ENCODE measurements at regions of chr2 and their contacts with region 1.

Region 1: GRCh38 chr2:171160119-171160955 is at the start of gene TLK1:
- DNase-seq: peak; percentile 75
- H3K4me3 Mint-ChIP-seq: peak within 1 kb of the TSS; percentile 90
- H3K27ac Mint-ChIP-seq: peak within 1 kb of the TSS; percentile 93
- H3K4me1 Mint-ChIP-seq: peaks cover 57% of the 10 kb centered on the region
- H3K27me3 Mint-ChIP-seq: no peaks in the 10 kb centered on the region
- total RNA-seq, gene TLK1: 54.5 to 55.9 TPM

Region 2: GRCh38 chr2:170098626-170099312 is 1061.6 kb before region 1 on chr2:
- CTCF ChIA-PET with region 1: no interaction called
- intact Hi-C with region 1: no loop called
- DNase-seq: no peak
- H3K4me3 Mint-ChIP-seq: no peak overlapping the region
- H3K27ac Mint-ChIP-seq: no peak overlapping the region
- H3K4me1 Mint-ChIP-seq: no peaks in the 10 kb centered on the region
- H3K27me3 Mint-ChIP-seq: peaks cover 12% of the 10 kb centered on the region

Region 3: DNA sequence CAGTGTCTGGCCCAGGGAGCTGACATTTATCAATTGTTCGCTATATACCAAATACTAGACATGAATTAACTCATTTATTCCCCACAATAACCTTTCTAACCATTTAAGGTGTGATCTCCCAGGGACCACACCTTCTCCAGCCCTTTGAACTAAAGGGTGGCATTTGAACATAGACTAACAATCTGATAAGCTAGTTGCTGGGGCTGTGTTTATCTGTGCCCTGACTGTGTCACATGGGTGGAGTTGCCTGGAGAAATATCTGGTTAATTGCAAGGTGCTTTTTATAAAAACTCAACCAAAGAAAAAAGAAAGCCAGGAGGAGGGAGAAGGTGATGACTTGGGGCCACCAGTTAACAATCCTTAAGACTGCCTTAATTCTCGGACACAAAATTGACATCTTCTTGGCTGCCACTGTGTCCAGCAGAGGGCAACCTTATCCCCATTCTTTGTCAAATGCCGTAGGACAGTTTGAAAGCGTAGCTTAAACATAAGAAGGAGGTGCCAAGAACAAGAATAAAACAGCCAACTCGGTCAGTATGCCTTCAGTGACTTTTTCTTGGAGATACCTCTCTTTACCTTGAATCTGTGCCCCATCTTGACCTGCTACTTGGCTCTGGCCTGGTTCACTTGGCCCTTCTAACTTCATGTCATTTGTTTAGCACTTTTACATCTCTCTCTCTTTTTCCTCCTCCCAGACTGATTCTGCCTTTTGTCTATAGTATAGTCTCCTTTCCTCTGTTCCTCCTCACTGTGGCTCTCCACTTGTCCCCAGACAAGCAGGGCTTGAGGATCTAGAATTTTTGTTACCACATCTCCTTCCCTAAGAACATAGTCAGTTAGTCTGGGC is 799.0 kb before region 1 on chr2:
- CTCF ChIA-PET with region 1: no interaction called
- intact Hi-C with region 1: loop called (anchors 5 kb)
- DNase-seq: peak; percentile 77
- H3K4me3 Mint-ChIP-seq: no peak overlapping the region
- H3K27ac Mint-ChIP-seq: no peak overlapping the region
- H3K4me1 Mint-ChIP-seq: peaks cover 28% of the 10 kb centered on the region
- H3K27me3 Mint-ChIP-seq: peaks cover 6% of the 10 kb centered on the region

Region 4: DNA sequence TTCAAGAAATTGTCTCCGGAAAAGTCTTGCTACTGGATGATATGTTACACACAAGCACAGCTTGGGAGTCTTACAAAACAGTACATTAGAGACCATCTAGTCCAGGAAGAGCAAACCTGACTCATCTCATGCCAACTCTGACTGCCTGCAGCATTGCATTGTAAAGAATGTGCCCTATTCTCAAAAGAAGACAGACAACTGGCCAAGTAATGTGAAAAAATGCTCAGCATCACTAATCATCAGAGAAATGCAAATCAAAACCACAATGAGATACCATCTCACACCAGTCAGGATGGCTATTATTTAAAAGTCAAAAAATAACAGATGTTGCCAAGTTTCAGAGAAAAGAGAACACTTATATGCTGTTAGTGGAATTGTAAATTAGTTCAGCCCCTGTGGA is 274.0 kb before region 1 on chr2:
- CTCF ChIA-PET with region 1: no interaction called
- intact Hi-C with region 1: no loop called
- DNase-seq: no peak
- H3K4me3 Mint-ChIP-seq: no peak overlapping the region
- H3K27ac Mint-ChIP-seq: no peak overlapping the region
- H3K4me1 Mint-ChIP-seq: no peaks in the 10 kb centered on the region
- H3K27me3 Mint-ChIP-seq: peaks cover 6% of the 10 kb centered on the region

Region 5: DNA sequence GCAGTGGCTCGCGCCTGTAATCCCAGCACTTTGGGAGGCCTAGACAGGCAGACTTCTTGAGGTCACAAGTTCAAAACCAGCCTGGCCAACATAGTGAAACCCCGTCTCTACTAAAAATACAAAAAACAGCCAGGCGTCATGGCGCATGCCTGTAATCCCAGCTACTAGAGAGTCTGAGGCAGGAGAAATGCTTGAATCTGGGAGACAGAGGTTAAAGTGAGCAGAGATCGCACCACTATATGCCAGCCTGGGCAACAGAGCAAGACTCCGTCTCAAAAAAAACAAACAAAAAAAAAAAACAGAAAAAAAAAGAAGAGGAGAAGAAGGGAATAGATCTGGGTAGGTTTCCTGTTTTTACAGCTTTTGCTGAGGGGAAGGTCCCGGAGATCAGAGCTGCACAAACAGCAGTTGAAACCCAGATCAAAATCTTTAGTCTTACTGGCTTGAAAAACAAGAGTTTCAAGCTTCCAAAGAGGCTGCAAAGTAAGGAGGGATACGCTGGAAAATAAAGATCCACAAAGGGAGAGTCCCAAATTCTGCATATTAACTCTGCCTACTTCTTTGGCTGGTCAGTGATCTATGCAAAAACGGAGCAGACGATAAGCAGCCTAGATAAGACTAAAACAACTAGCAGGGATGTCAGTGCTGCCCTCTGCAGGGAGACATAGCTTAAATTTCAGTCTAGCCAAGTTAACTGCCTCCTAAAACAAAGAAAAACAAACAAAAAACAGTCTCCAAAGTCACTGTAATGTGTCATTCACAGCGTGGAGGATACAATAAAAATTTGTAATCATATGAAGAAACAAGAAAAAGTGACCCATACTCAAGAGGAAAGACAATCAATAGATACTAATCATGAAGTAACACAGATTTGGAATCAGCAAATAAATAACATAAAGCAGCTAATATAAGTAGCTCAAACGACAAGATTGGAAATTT is 73.7 kb before region 1 on chr2:
- CTCF ChIA-PET with region 1: interaction called, 21 read pairs
- intact Hi-C with region 1: loop called (anchors 1 kb)
- DNase-seq: peak; percentile 80
- H3K4me3 Mint-ChIP-seq: peak overlapping the region; percentile 77
- H3K27ac Mint-ChIP-seq: peak overlapping the region; percentile 74
- H3K4me1 Mint-ChIP-seq: peaks cover 65% of the 10 kb centered on the region
- H3K27me3 Mint-ChIP-seq: no peaks in the 10 kb centered on the region

Region 6: DNA sequence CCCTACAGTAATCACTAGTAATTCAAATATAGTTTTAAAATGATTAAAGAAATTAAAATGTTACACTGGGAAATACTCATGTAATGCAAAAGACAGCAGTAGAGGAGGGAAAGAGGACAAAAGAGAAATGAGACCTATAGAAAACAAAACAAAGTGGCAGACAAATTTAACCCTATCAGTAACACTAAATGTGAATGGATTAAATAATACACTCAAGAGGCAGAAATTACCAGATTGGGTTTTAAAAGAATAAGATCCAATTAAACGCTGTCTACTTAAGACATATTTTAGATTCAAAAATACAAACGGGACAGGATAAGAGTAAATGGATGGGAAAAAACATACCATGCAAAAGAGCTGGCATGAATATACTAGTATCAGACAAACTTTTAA is 16.7 kb before region 1 on chr2:
- CTCF ChIA-PET with region 1: interaction called, 6 read pairs
- intact Hi-C with region 1: loop called (anchors 2 kb)
- DNase-seq: no peak
- H3K4me3 Mint-ChIP-seq: no peak overlapping the region
- H3K27ac Mint-ChIP-seq: no peak overlapping the region
- H3K4me1 Mint-ChIP-seq: peaks cover 83% of the 10 kb centered on the region
- H3K27me3 Mint-ChIP-seq: no peaks in the 10 kb centered on the region

Region 7: GRCh38 chr2:171244970-171245782 is 84.8 kb after region 1 on chr2:
- CTCF ChIA-PET with region 1: no interaction called
- intact Hi-C with region 1: loop called (anchors 1 kb)
- DNase-seq: peak; percentile 32
- H3K4me3 Mint-ChIP-seq: no peak overlapping the region
- H3K27ac Mint-ChIP-seq: no peak overlapping the region
- H3K4me1 Mint-ChIP-seq: peaks cover 40% of the 10 kb centered on the region
- H3K27me3 Mint-ChIP-seq: no peaks in the 10 kb centered on the region

Region 8: DNA sequence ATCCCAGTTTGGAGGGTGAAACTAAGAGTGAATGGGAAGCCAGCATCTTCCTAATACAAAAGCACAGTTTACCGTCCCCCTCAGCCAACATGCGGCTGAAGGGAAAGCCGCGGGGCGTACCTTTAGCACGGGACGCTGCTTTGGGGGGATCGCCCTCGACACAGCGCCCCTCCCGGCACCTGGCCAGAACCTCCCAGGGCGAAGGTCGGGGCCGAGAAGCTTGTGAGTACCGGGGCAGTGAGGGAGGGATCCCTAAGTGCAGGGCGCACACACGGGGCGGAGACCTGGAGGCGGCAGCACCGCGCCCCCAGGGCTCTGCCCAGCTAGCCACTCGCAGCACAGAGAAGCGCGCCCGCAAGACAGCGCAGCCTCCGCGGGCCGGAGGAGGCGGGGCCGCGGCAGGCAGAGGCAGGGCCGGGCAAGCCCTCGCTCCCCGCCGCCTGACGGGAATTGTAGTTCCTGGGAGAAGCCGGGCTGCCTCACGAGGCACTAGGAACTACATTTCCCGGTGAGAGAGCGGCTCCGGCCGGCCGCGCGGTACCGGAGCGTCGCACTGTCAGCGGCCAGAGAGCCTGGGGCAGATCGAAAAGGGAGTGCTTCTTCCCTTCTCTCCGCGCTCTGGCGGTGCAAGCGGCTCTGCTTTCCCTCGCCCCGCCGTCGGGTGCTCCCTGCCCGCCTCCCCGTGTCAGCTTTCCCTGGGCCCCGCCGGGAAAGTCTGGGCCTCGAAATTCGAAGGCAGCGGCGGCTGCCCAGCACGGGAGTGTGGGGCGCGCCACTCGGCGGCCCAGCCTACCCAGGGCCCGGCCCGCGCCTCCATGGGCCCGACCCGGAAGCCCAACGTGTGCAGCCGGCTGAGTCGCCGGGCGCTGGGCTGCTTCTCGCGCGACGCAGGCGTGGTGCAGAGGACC is 273.7 kb after region 1 on chr2 and contains the starts of genes DCAF17 and METTL8:
- CTCF ChIA-PET with region 1: no interaction called
- intact Hi-C with region 1: loop called (anchors 1 kb)
- DNase-seq: peak; percentile 96
- H3K4me3 Mint-ChIP-seq: peak within 1 kb of the TSS; percentile 86
- H3K27ac Mint-ChIP-seq: peak within 1 kb of the TSS; percentile 94
- H3K4me1 Mint-ChIP-seq: peaks cover 54% of the 10 kb centered on the region
- H3K27me3 Mint-ChIP-seq: no peaks in the 10 kb centered on the region
- total RNA-seq, gene DCAF17: 21.1 to 21.3 TPM
- total RNA-seq, gene METTL8: 32.9 to 34.5 TPM